ENCODE measurements at regions of chr2 and their contacts with region 1.

Region 1: GRCh38 chr2:72150157-72150865 is 2.6 kb upstream of the CYP26B1 start:
- DNase-seq: peak; percentile 63
- ATAC-seq: peak; percentile 75
- H3K4me3 ChIP-seq: no peak overlapping the region
- H3K27ac ChIP-seq: no peak overlapping the region
- H3K4me1 ChIP-seq: peaks cover 11 to 34% of the 10 kb centered on the region in 2 experiments; a peak in 3 of 4 replicates
- H3K27me3 ChIP-seq: no peaks in the 10 kb centered on the region
- CTCF ChIP-seq: peak; percentile 70 to 86 (median 77)
- POLR2A ChIP-seq: no peak
- RAD21 ChIP-seq: peak; percentile 95

Region 2: DNA sequence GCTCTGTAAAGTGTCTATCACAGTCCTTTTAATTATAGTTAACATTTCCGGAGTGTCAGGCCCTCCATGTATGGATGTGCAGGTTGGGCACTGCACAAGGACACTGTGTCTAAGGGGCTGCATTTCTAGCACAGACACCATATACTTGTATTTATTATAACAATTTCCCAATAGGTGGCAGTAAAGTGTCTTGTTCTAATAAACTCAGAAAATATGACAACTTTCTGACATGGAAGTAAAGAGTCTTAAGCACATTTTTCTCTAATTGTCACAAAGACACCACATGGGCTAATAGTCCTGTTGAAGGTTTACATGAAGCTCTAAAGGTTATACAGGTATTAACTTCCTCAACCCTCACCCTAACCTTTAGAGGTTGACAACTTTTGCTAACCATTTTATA is 540.4 kb before region 1 on chr2:
- CTCF ChIA-PET with region 1: interaction called, 3 read pairs
- POLR2A ChIA-PET with region 1: no interaction called
- RAD21 ChIA-PET with region 1: no interaction called
- intact Hi-C with region 1: loop called (anchors 5 kb)
- DNase-seq: peak; percentile 24
- ATAC-seq: peak; percentile 83
- H3K4me3 ChIP-seq: no peak overlapping the region
- H3K27ac ChIP-seq: no peak overlapping the region
- H3K4me1 ChIP-seq: no peaks in the 10 kb centered on the region
- H3K27me3 ChIP-seq: peaks cover 13% of the 10 kb centered on the region; the same call in 1 of the 2 replicates
- CTCF ChIP-seq: peak; percentile 8 to 61 (median 53); a peak in 3 of 6 replicates
- POLR2A ChIP-seq: no peak
- RAD21 ChIP-seq: peak; percentile 68

Region 3: DNA sequence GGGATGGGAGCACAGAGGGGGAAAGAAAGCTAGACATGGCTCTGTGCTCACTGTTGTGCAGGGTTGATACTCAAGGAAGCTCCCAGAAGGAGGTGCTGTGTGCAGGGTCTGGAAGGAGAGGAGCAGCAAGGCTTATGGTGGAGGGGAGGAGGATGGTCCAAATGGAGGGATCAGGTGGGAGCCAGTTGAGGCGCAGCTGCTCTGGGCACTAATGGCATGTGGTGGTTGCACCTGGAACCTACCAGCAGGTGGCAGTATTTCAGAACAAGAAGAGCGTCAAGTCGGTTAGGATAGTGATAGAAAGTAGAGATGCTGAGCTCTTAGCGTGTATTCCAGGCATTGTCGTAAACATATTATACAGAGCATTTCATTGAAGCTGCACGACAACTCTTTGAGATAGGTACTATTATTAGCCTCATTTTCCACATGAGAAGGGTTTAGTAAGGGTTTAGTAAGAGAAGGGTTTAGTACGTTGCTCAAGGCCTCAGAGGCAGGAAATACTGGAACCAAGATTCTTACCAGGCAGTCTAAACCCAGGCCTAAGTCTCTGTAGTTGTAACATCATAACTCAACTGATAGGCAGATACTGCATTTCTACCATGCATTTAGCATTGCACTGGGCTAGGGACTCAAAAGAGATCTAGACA is 226.3 kb before region 1 on chr2:
- CTCF ChIA-PET with region 1: interaction called, 39 read pairs
- POLR2A ChIA-PET with region 1: interaction called, 3 read pairs
- RAD21 ChIA-PET with region 1: interaction called, 14 to 15 read pairs
- intact Hi-C with region 1: loop called (anchors 1 kb)
- DNase-seq: peak; percentile 72
- ATAC-seq: peak; percentile 93
- H3K4me3 ChIP-seq: no peak overlapping the region
- H3K27ac ChIP-seq: no peak overlapping the region
- H3K4me1 ChIP-seq: peaks cover 0 to 7% of the 10 kb centered on the region in 2 experiments; a peak in 1 of 4 replicates
- H3K27me3 ChIP-seq: no peaks in the 10 kb centered on the region
- CTCF ChIP-seq: peak; percentile 80 to 92 (median 88)
- POLR2A ChIP-seq: no peak
- RAD21 ChIP-seq: peak; percentile 87

Region 4: DNA sequence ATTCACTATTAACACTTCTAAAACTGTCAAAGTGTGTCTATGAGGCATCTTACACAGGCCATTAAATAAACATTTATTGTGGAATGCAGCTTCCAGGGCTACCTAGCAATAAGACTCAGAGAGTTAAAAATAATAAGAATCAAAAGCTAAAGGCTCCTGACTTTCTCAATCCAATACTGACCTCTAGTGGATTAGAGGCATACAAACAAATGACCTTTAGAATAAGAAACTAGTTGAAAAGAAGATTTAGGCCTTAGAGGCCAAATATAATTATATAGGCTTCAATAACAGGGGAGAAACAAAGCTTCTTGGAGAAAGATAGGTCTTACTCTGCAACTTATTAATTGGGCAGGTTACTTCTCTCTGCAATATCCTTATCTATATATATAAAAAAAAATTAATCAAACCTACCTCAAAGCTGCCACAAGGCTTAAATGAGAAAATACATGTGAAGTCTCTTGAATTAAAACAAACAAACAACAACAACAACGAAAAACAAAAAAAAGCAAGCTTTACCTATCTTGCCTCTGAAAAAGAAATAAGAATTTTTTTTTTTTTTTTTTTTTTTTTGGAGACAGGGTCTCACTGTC is 429.4 kb after region 1 on chr2:
- CTCF ChIA-PET with region 1: interaction called, 19 read pairs
- POLR2A ChIA-PET with region 1: interaction called, 3 read pairs
- RAD21 ChIA-PET with region 1: interaction called, 7 to 10 read pairs
- intact Hi-C with region 1: loop called (anchors 1 kb)
- DNase-seq: peak; percentile 26
- ATAC-seq: peak; percentile 50; the same call in 1 of the 2 replicates
- H3K4me3 ChIP-seq: no peak overlapping the region
- H3K27ac ChIP-seq: no peak overlapping the region
- H3K4me1 ChIP-seq: no peaks in the 10 kb centered on the region
- H3K27me3 ChIP-seq: no peaks in the 10 kb centered on the region
- CTCF ChIP-seq: peak; percentile 54 to 76 (median 74); a peak in 5 of 6 replicates
- POLR2A ChIP-seq: no peak
- RAD21 ChIP-seq: peak; percentile 87